Activated CD8-positive, alpha-beta memory T cell treated with anti-CD3 and anti-CD28 coated beads, Interleukin-2, amount 10 ng/mL, durations not matched to agents 7 days and 5 days (primary cell): ENCODE measurements at regions of chr12 and their contacts with region 1.

Region 1: DNA sequence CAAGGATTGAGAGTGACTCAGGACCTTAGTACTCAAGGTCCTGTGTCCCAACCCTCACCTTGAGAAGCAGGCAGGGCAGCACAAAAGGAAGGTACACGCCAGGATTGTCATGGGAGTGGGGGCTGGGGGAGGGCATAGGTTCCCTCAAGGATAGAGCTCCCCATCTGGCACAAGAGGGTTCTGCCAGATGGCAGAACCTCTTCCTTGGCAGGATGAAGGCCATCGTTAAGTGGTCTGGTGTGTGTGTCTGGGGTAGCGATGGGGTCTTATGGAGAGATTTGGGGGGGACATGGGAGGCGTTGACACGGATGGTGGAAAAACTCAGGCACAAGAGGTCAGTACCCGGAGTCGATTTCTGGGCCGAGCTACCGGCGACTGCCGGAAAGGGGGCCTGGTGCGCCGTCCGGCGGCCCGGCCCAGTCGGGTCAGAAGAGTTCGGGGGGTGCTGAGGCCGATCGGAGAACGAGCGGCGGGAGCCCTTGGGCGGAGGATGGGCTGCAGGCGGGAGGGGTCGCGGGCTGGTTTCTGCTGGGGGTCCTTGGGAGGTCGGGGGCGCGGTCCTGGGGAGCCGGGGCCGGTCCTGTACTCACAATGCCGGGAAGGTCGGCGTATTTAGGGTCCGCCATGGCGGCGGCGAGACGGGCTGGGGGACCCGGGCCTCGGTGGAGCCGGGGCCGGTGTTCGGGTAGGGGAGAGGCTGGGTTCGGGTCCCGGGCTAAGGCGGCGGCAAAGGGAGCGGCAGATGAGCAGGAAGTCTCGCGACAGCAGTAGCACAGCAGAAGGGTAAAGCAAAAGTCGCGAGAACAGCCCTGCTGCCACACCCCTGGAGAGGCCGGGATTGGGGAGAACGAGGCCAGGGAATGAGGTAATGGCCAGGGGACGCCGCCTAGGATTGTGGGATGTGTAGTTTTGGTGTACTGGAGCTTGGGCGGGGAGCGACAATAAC is at the start of gene DCTN2:
- DNase-seq: peak; percentile 99
- ATAC-seq: peak; percentile 96
- H3K4me3 Mint-ChIP-seq: peak within 1 kb of the TSS; percentile 100
- H3K27ac Mint-ChIP-seq: peak within 1 kb of the TSS; percentile 96
- H3K4me1 Mint-ChIP-seq: peaks cover 56% of the 10 kb centered on the region
- H3K27me3 Mint-ChIP-seq: peaks cover 11% of the 10 kb centered on the region
- total RNA-seq, gene DCTN2: 90.8 to 99.0 TPM

Region 2: DNA sequence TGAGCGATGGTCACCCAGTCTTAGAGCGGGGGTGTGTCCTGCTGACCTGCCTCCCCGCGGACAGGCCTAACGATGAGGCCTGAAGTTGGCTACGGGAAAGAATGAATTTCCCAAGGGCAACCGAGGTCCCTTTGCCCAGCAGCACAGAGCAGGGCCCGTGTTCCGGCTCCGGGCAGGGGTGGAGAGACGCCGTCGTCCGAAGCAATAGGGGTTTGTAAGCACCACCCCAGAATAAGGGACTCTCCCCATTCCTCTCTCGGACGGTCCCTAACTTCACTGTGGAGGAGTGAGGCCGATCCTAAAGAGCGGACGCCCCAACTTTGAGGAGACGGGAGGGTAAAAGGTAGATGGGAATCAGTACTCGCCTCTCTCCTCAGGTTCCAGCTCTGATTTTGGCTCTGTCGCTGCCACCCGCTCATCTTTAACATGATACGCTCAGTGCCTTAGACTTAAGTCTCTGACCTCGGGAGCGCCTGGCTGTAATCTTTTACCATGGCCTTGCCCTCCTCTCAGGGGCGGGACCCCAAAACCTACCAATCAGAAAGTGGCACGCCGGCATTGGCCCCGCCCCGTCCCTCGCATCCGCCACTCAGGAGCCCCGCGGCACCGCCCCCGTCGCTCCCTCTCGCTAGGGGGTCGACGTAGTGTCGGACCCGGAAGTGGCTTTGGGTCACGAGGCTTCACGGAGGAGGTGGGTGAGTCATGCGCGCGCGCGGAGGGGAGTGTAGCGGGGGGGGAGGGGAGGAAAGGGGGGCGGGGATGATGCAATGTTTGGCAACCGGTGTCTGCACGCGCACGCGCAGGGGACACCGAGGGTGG is 26.4 kb before region 1 on chr12 and contains the start of gene DDIT3:
- CTCF ChIA-PET with region 1: interaction called, 13 read pairs
- DNase-seq: peak; percentile 100
- ATAC-seq: peak; percentile 73
- H3K4me3 Mint-ChIP-seq: peak within 1 kb of the TSS; percentile 93
- H3K27ac Mint-ChIP-seq: peak within 1 kb of the TSS; percentile 100
- H3K4me1 Mint-ChIP-seq: peaks cover 55% of the 10 kb centered on the region
- H3K27me3 Mint-ChIP-seq: no peaks in the 10 kb centered on the region
- total RNA-seq, gene DDIT3: 15.3 to 15.9 TPM

Region 3: DNA sequence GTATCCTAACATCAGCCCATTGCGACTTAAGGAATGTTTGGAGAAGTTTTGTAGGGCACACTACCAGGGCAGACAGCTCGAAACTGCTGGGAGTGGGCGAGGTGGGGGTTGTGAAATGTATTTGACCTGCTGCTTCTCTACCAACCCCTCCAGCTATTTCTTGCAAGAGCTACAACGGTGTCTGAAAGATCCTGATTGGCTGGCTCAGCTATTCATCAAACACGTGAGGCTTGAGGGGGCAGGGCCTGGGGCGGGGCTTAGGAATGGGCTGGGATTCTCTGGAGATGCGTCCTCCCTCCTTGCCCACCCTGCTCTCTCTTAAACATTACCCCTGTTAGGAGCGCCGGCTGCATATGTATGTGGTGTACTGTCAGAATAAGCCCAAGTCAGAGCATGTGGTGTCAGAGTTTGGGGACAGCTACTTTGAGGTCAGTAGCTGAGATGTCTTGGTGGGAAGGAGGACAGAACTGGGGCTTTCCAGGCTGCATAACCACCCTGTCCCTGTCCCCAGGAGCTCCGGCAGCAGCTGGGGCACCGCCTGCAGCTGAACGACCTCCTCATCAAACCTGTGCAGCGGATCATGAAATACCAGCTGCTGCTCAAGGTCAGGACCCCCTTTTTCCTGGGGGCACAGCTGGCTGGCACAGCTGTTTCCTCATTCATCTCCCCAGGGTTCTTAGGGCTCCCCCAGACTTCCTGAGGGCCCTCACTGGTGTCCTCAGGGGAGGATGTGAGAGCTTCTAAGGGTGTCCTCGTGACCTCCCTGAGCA is 67.7 kb after region 1 on chr12:
- CTCF ChIA-PET with region 1: no interaction called
- DNase-seq: no peak
- ATAC-seq: peak; percentile 31
- H3K4me3 Mint-ChIP-seq: no peak overlapping the region
- H3K27ac Mint-ChIP-seq: no peak overlapping the region
- H3K4me1 Mint-ChIP-seq: peaks cover 13% of the 10 kb centered on the region
- H3K27me3 Mint-ChIP-seq: peaks cover 82% of the 10 kb centered on the region